GM13976 (cell line): ENCODE measurements at regions of chr4 and their contacts with region 1.

Region 1: DNA sequence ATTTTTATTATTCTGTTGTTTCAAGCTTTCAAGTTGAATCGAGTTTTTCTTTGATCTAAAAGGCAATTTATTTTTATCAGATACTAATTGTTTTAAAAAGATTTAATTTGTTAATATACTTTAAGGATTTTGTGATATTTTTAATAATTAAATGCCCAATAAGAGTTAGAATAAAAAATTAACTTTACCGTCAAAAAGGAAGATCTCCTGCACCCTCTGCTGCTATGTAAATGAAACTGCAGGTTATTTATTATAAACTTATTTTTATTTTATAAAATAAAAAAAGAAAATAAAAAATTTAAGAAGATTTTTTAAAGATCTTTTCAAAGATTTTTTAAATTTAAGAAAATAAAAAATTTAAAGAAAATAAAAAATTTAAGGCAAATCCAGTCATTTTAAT is 166.1 kb downstream of the CCSER1 start:
- DNase-seq: no peak
- CTCF ChIP-seq: no peak

Region 2: DNA sequence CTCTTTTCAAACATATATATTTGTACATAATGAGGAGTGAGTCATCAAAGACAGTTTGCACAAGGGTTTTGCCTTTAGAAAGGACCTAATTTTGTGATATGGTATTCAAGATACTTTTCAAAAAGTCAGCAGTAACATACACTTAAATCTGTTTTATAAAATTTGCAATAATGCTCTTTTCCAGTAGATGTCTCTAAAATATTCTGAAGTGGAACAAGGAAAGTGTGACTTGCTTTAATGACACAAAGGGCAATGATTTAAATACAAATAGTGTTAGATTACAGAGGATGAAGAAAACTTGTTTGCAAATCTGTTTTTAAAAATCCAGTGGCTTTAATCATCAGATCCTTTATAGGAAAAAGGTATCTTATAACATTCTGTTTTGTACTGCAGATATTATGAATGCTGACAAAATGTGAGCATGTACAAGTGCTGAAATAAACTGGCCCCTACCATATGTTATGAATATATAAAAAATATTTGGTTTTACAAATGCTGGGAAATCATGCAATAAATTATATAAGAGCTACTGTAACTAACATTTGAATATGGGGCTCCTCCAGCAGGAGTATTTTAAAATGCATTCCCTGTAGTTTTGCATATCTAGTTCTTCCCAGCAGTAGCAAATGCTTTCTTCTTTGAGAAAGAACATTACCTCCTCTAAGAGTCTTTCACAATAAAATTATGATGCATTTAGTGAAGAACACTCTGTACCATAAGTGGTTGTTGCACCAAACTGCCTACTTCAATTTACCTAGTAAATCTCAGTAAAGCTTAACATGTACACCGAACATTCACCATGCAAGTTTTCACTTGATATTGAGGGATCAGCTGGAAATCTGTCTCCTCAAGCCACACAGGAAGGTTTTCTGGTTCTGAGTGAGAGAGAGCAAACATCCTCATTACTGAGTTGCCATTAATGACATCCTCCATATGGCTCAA is 378.4 kb before region 1 on chr4:
- in situ Hi-C with region 1: loop called (anchors 25 kb)
- DNase-seq: no peak
- CTCF ChIP-seq: no peak

Region 3: GRCh38 chr4:90095000-90095399 is 198.3 kb before region 1 on chr4:
- in situ Hi-C with region 1: no loop called
- DNase-seq: no peak
- CTCF ChIP-seq: no peak

Region 4: DNA sequence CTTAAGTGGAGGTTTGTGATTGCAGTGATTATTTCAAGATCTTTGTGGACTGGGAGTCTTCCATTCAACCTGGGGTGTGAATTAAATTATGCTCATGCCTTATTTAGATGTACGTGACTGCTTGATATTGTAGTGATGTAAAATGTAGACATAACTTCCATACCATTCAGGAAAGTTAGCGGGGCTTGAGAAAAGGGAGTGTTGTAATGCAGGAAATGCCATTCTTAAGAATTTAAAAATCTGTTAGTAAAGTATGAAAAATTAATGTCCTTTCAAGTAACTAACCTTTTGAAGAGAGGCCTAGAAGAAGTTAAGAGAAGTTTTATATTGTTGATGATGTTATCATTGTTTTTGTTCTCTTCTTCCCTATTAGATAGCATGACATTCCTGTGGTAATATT is 152.1 kb after region 1 on chr4:
- in situ Hi-C with region 1: no loop called
- DNase-seq: no peak
- CTCF ChIP-seq: no peak